Heart left ventricle (tissue), 16 donors: ENCODE measurements at regions of chrX and their contacts with region 1.

Region 1: DNA sequence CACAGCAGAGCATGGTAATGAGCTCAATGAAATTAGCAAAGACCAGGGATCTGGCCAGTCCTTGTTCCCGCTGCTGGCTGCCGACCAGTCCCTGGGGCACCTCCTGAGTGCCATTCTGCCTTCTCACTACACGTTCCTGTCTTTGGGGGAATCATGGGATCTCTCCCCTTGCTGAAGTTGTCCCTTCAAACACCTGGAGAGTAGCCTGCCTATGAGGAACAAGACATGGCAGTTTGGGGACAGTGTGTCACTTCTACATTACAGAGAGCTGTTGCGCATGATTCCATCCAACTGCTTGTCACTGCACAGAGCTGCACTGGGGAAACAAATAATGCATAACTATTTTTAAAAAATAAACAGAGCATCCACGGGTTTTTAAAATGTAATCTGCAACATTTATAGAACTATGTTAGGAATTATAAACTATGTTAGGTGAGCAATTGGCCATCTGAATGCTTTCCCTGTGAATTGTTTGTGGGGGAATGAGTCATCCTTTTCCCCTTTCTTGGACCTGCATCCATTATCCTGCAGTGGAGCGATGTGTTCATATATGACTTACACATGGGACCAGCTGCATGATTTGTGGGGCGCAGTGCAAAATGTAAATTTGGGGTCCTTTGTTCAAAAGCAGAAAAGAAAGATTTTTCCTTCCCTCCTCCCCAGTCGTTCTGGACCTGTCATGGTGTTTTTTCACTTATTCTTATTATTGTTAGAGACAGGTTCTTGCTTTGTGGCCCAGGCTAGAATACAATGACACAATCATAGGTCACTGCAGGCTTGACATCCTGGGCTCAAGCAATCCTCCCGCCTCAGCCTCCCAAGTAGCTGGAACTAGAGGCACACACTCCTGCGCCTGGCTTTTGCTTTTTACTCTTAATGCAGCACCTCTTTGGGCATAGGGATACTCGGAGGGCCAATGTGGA is 115.0 kb upstream of the TBL1X start:
- DNase-seq: no peak
- ATAC-seq: no peak
- H3K4me3 ChIP-seq: no peak overlapping the region
- H3K27ac ChIP-seq: no peak overlapping the region
- H3K4me1 ChIP-seq: peaks cover 0 to 34% (median 0%) of the 10 kb centered on the region in 12 donors
- H3K27me3 ChIP-seq: peaks cover 0 to 5% (median 0%) of the 10 kb centered on the region in 9 donors
- CTCF ChIP-seq: no peak
- POLR2A ChIP-seq: no peak

Region 2: DNA sequence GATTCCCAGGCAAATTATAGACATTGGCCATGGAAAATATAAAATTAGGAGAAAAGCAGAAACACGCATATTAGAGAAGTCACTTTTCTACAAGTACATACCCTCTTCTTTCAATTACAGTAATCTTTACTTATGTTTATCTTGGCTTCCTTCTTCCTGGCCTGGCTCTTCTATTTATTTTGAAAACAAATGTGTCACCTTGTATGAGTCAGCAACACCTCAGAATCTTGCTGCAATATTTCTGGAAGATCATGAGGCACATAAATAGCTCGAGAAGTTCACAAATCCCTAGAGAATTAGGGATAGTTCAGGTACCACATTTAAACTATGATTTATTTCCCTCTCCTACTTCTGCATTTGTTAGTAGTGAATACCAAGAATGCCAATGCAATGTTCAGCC is 742.5 kb before region 1 on chrX:
- intact Hi-C with region 1: no loop called
- DNase-seq: no peak
- ATAC-seq: peak in 1 of 4 donors; percentile 45
- H3K4me3 ChIP-seq: no peak overlapping the region
- H3K27ac ChIP-seq: no peak overlapping the region
- H3K4me1 ChIP-seq: no peaks in the 10 kb centered on the region
- H3K27me3 ChIP-seq: no peaks in the 10 kb centered on the region
- CTCF ChIP-seq: no peak
- POLR2A ChIP-seq: no peak

Region 3: DNA sequence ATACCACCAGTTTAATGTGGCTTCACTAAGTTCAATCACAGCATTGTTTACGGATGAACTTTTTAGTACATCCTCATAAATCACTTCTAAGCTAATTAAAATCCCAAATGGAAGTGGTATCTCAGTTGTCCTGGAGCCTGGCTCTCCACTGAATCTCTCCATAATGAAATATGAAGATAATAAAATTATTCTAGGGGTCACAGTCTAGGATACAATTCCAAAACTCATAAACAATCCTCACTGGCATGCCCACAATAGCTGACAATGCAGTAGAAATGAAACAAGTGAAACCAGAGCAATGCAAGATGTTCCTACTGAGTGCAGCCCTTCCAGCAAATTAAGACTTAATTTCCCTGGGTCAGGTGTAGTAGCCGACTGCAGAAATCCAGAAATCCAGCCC is 268.6 kb before region 1 on chrX:
- intact Hi-C with region 1: no loop called
- DNase-seq: no peak
- ATAC-seq: no peak
- H3K4me3 ChIP-seq: no peak overlapping the region
- H3K27ac ChIP-seq: no peak overlapping the region
- H3K4me1 ChIP-seq: no peaks in the 10 kb centered on the region
- H3K27me3 ChIP-seq: peaks cover 0 to 16% (median 0%) of the 10 kb centered on the region in 9 donors
- CTCF ChIP-seq: no peak
- POLR2A ChIP-seq: no peak

Region 4: DNA sequence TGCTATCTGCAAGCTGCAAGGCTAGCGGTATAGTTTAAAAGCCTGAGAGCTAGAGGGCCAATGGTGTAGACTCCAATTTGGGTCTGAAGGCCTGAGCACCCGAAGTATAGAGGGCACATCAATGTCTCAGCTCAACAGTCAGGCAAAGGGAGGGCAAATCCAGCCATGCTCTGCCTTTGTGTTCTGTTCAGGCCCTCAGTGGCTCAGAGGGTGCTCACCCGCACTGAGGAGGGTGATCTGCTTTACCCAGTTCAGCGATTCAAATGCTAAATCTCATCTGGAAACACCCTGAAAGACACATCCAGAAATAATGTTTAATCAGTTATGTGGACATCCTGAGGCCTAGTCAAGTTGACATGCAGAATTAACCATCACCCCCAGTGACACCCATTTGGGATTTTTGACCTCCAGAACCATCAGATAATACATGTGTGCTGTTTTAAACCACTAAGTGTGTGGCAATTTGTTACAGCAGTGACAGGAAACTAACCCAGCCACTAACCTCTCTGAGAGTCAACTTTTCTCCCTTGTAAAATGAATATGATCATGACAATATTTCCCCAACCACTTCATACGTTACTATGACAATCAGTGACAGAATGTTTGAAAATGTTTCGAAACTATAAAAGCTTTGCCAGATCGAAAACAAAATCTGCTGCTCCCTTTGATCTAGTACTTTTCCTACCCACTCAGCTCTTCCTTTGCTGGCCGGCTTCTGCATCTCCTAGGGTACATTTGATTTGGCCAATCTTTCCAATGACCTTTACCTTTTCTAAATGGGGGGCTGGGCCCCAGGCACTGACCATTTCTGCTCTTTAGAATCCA is 106.6 kb after region 1 on chrX:
- intact Hi-C with region 1: loop called in 3 of 10 experiments (anchors 5 to 10 kb)
- DNase-seq: no peak
- ATAC-seq: no peak
- H3K4me3 ChIP-seq: no peak overlapping the region
- H3K27ac ChIP-seq: peak overlapping the region in 1 of 12 donors; percentile 27
- H3K4me1 ChIP-seq: peaks cover 0 to 7% (median 0%) of the 10 kb centered on the region in 12 donors
- H3K27me3 ChIP-seq: no peaks in the 10 kb centered on the region
- CTCF ChIP-seq: no peak
- POLR2A ChIP-seq: no peak

Region 5: DNA sequence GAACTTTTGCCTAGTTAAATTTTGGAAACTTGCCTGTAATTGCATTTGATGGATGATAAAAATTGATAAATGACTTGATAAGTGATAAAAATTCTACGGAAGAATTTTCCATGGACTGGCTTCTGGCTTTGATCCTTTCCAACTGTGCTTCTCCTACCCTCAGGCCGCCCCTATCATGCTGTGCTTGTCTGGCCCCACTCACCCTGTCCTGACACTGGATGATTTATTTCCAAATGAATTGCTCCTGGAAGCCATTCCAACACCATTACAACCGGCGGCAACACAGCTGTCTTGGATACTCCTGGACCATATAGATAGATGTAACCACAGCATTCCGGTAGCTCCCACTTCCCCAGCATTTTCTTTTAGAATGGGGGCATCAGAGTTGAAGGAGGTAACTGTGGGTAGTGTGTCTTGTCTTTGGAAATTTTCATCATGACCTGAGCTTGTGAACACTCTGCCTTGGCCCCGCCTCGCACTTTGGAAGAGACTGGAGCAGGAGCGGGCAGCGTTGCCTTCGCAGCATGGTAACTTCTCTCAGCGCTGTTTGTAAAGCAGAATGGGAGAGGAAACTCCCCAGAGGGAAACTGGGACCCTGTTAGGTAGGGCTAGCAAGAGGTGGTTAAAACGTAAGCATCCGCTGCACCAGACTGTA is 192.4 kb after region 1 on chrX:
- intact Hi-C with region 1: no loop called
- DNase-seq: no peak
- ATAC-seq: no peak
- H3K4me3 ChIP-seq: no peak overlapping the region
- H3K27ac ChIP-seq: no peak overlapping the region
- H3K4me1 ChIP-seq: no peaks in the 10 kb centered on the region
- H3K27me3 ChIP-seq: peaks cover 0 to 4% (median 0%) of the 10 kb centered on the region in 9 donors
- CTCF ChIP-seq: no peak
- POLR2A ChIP-seq: no peak

Region 6: DNA sequence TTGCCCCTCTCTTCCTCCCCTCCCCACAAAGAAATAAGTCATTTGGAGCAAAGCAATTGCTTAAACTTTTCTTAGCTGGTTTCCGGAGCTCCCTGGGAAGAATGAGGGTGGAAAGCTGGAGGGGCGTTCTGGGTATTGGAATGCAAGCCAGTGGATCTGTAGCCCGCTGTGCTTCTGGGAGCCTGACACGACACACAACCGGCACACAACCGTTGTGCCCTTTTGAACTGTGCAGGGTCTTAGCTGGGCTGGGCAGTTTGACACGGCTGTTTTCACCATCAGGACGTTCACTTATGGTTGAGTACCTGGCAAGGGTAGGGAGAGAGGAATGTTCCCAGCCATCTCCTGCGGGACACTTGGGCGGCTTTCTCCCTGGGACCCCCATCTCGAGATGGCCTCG is 474.7 kb after region 1 on chrX:
- intact Hi-C with region 1: no loop called
- DNase-seq: no peak
- ATAC-seq: no peak
- H3K4me3 ChIP-seq: no peak overlapping the region
- H3K27ac ChIP-seq: no peak overlapping the region
- H3K4me1 ChIP-seq: no peaks in the 10 kb centered on the region
- H3K27me3 ChIP-seq: no peaks in the 10 kb centered on the region
- CTCF ChIP-seq: no peak
- POLR2A ChIP-seq: no peak